ENCODE measurements at regions of chr3 and their contacts with region 1.

Region 1: GRCh38 chr3:195259475-195260279 is 11.3 kb downstream of the XXYLT1 start:
- DNase-seq: peak; percentile 96
- H3K4me3 Mint-ChIP-seq: peak overlapping the region; percentile 77
- H3K27ac Mint-ChIP-seq: no peak overlapping the region
- H3K4me1 Mint-ChIP-seq: no peaks in the 10 kb centered on the region
- H3K27me3 Mint-ChIP-seq: no peaks in the 10 kb centered on the region
- CTCF ChIP-seq: peak; percentile 96

Region 2: DNA sequence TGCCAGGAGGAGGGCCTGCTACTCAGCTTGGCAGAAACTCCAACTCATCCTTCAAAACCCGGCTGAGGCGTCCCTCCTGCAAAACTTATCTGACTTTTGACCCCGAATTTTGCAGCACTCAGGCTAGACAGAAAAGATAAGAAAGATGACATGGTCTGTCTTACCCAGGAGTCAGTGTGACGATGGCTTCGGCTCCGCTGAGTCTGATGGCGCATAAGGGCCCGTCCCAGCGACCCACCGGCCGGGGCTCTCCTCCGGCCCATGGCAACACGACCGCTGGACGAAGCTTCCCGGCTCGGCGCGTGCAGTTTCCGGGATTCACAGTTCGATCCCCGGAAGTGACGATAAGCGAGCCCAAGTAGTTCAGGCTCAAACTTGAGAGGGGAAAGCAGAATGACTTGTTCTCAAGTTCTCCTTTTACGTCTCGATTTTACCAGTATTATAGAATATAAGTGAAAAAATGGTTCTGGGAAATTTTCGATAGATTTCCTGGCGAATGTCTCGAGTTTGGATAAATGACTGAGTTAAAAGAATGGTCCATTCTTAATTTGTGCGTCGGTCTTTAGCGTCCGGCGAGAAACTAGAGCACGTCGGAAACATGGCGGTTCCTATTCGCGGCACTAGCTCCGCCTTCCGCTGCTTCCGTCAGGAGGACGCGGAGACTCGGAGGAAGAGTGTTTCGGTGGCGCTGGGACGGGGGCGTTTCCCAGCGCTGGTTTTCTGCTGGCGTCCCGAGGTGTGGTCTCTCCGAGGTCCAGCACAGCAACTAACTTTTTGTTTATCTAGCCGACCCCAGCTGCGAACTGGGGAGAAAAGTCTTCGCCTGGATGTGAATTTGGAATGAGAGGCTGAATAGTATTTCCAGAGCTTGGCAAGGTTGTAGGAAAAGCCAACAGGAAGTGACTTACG is 587.5 kb before region 1 on chr3 and contains the start of gene LSG1:
- CTCF ChIA-PET with region 1: interaction called, 13 read pairs
- intact Hi-C with region 1: no loop called
- DNase-seq: peak; percentile 94
- H3K4me3 Mint-ChIP-seq: peak within 1 kb of the TSS; percentile 100
- H3K27ac Mint-ChIP-seq: peak within 1 kb of the TSS; percentile 99
- H3K4me1 Mint-ChIP-seq: peaks cover 53% of the 10 kb centered on the region
- H3K27me3 Mint-ChIP-seq: peaks cover 30% of the 10 kb centered on the region
- CTCF ChIP-seq: no peak
- total RNA-seq, gene LSG1: 86.3 and 90.8 TPM in 2 replicates

Region 3: DNA sequence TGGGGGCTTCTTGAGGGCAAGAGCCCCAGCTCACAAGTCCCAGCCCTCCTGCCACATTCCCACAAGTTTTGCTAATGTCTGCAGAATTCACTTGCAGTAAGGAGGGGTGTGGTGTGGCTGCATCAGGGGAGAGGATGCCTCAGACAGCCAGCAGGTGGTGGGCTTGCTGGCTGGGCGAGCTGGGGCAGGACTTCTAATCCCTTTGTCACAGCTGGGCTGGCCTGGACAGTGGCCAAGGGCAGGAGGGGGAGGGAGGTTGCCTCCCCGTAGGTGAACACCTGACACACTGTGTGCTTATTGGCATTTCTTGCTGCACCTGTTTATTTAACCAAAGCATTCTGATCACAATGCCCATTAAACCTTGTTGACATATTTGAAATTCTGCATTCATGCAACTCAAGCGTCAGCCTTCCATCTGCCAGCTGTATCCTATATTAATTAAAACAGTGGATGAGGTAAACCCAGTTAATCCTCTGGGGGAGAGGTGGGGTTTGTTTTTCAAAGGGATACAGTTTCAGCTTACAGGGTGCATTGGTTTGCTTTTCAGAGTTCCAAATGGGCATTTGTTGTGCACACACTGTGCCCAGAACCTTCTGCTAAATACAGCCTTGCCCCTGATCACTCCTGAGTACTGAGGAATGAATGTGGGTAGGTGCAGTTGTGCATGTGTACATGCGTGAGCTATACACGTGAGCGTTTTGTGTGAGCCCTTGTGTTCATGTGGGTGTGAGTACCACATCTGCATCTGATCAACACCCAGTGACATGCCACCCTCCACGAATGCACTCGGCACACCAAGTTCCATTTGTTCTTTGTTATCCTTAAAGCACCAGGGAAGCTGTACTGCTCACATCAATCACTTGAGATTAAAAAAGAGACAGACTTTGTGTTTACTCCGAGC is 257.5 kb before region 1 on chr3:
- CTCF ChIA-PET with region 1: no interaction called
- intact Hi-C with region 1: loop called (anchors 5 kb)
- DNase-seq: peak; percentile 96
- H3K4me3 Mint-ChIP-seq: no peak overlapping the region
- H3K27ac Mint-ChIP-seq: no peak overlapping the region
- H3K4me1 Mint-ChIP-seq: peaks cover 25% of the 10 kb centered on the region
- H3K27me3 Mint-ChIP-seq: peaks cover 74% of the 10 kb centered on the region
- CTCF ChIP-seq: peak; percentile 85

Region 4: DNA sequence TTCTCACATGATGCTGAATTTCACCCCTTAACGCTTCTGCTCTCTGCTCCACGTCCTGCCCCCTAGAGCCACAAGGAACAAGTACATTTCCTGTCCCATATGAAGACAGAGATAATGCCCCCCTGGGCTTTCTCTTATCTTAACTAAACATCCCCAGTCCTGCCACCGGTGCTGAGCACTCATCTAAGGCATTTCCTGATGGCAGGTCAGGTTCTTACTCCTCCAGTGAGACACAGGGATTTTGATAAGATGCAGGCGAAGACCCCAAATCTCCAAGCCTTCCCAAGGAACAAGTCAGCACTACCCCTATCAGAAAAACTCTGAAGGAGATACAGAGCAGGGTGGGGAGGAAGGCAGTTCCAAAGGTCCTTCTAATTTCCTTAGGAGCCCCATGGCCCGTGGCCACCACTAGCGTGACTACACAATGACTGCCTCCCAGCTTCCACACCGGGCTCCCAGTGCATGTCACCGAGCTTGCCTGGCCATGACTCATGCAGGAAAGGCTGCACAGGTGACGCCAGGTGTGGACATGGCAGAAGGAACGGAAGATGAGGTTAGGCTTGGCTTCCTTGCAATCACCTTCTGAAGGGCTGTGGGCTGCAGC is 141.6 kb before region 1 on chr3:
- CTCF ChIA-PET with region 1: no interaction called
- intact Hi-C with region 1: loop called (anchors 2 kb)
- DNase-seq: peak; percentile 94
- H3K4me3 Mint-ChIP-seq: peak overlapping the region; percentile 42
- H3K27ac Mint-ChIP-seq: peak overlapping the region; percentile 95
- H3K4me1 Mint-ChIP-seq: peaks cover 59% of the 10 kb centered on the region
- H3K27me3 Mint-ChIP-seq: no peaks in the 10 kb centered on the region
- CTCF ChIP-seq: peak; percentile 44

Region 5: GRCh38 chr3:195286115-195286872 is 26.6 kb after region 1 on chr3:
- CTCF ChIA-PET with region 1: no interaction called
- intact Hi-C with region 1: no loop called
- DNase-seq: no peak
- H3K4me3 Mint-ChIP-seq: no peak overlapping the region
- H3K27ac Mint-ChIP-seq: peak overlapping the region; percentile 34
- H3K4me1 Mint-ChIP-seq: peaks cover 14% of the 10 kb centered on the region
- H3K27me3 Mint-ChIP-seq: no peaks in the 10 kb centered on the region
- CTCF ChIP-seq: no peak

Region 6: DNA sequence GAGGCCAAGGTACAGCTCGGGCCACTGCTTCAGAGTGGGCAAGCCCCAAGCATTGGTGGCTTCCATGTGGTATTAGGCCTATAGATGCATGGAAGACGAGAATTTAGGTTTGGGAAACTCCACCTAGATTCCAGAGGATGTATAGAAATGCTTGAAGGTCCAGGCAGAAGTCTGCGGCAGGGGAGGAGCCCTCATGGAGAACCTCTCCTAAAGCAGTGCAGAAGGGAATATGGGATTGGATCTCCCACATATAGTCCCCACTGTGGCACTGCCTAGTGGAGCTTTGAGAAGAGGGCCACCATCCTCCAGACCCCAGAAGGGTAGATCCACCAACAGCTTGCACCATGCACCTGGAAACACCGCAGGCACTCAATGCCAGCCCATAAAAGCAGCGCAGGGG is 59.4 kb after region 1 on chr3:
- CTCF ChIA-PET with region 1: no interaction called
- intact Hi-C with region 1: no loop called
- DNase-seq: no peak
- H3K4me3 Mint-ChIP-seq: no peak overlapping the region
- H3K27ac Mint-ChIP-seq: no peak overlapping the region
- H3K4me1 Mint-ChIP-seq: no peaks in the 10 kb centered on the region
- H3K27me3 Mint-ChIP-seq: no peaks in the 10 kb centered on the region
- CTCF ChIP-seq: no peak